Activated B cell treated with CpG ODN at 0.5 μM for 24 hours (primary cell): ENCODE measurements at regions of chr16 and their contacts with region 1.

Region 1: DNA sequence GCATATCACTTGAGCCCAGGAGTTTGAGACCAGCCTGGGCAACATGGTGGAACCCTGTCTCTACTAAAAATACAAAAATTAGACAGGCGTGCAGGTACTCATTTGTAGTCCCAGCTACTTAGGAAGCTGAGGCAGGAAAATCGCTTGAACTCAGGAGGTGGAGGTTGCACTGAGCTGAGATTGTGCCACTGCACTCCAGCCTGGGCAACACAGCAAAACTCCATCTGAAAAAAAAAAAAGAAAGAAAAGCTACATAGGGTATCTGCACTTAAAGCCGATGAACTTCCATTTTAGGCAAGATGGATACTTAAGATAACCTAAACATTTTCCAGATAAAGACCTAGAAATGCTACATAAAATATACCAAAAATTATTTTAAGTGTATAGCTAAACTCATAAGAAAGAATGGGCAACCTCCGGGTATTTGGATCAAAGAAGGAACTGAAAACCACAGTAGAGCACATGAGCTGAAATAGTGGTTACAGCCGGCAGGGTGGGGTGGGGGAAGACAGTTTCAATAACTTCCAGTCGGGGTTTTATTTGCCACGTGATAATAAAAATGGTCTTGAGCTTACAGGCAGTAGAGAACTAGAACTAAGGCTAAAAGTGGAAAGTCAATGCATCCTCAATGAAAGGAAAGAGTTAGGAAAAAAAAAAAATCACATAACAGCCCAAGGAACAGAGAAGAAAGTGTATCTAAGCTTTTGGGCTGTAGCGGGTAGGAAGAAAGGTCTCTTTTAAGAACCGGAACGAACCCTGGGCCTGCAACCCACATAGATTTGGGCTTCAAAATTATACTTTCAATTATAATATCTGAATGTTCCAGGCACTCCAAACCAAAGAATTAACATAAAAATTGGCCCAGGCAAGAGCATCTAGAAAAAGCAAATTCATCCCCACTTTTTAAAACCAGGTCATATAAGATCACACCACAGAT is 53.1 kb downstream of the CFDP1 start:
- DNase-seq: peak; percentile 37
- ATAC-seq: peak; percentile 97
- H3K4me3 Mint-ChIP-seq: peak overlapping the region; percentile 48
- H3K27ac Mint-ChIP-seq: no peak overlapping the region
- H3K4me1 Mint-ChIP-seq: peaks cover 28% of the 10 kb centered on the region
- H3K27me3 Mint-ChIP-seq: peaks cover 70% of the 10 kb centered on the region
- CTCF ChIP-seq: no peak

Region 2: DNA sequence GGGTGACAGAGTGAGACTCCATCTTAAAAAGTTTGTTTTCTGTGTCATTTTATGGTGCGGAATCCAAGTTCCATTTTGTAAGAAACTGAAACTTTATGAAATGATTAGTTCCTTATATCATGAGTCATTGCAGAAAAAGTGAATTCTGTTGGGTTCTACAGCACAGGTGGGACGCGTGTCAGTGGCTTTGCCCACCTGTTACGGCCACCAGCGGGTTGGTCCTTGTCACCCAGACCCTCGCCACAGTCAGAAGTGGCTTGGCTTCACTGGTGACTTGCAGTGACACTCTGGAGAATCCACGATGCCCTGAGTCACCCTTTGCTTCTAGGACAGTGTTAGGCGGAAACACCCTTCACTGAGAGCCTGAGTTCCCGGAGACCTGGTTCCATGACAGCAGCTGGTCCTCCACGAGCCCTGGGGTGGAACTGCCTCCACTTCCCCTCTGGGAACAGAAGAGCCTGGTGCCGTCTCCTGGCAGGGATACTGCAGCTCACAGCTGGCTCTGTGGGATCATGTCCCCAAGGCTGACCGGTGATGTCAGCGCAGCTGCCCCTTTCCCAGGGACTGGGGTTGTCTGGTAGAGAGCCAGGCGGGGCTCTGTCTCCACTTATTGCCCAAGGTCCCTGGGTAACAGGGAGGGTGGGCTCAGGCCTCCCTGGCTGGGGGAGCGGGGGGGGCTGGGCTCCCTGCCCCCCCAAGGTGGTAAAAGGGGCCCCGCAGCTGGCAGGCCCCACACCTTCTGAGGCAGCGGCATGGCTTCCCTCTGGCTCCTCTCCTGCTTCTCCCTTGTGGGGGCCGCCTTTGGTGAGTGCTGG is 161.7 kb before region 1 on chr16 and contains the start of gene CTRB1:
- CTCF ChIA-PET with region 1: interaction called, 5 read pairs
- POLR2A ChIA-PET with region 1: no interaction called
- intact Hi-C with region 1: loop called (anchors 5 kb)
- DNase-seq: no peak
- ATAC-seq: peak; percentile 67
- H3K4me3 Mint-ChIP-seq: peak within 1 kb of the TSS; percentile 70
- H3K27ac Mint-ChIP-seq: peak within 1 kb of the TSS; percentile 63
- H3K4me1 Mint-ChIP-seq: peaks cover 11% of the 10 kb centered on the region
- H3K27me3 Mint-ChIP-seq: peaks cover 5% of the 10 kb centered on the region
- CTCF ChIP-seq: no peak
- total RNA-seq, gene CTRB1: not detected in 2 replicates

Region 3: DNA sequence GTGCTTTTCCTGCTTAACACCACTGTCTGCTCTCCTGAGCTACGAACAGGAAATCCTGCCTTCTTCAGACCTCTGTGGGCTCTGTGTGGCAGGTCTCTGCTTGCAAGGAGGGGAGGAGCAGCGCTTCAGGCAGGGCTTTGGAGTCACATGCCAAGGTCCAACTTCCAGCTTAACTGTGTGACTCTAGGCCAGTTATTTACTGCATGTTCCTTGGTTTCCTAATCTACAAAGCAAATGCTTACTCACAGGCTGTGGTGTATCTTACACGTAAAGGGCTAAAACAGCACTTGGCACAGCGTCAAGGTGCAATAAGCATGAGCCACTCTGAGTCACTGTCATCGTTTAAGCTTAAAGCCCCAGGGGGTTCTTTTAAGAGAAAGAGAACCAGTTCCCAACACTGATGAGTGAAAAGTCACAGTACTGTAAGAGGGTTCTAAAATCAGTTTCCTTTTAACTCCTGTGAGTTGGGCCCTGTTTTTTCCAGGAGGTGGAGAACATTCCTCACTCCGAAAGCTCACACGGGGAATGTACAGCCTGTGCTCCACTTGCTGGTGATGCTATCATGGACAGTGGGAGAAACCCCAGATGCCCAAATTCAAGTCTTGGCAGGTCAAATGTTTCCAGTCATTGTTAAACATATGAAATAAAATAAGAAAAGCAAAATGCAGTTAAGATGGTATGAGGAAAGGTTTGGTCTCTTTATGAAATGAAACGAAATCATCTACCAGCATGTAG is 74.6 kb before region 1 on chr16:
- CTCF ChIA-PET with region 1: no interaction called
- POLR2A ChIA-PET with region 1: interaction called, 3 read pairs
- intact Hi-C with region 1: loop called (anchors 5 kb)
- DNase-seq: no peak
- ATAC-seq: peak; percentile 90
- H3K4me3 Mint-ChIP-seq: no peak overlapping the region
- H3K27ac Mint-ChIP-seq: no peak overlapping the region
- H3K4me1 Mint-ChIP-seq: peaks cover 2% of the 10 kb centered on the region
- H3K27me3 Mint-ChIP-seq: peaks cover 2% of the 10 kb centered on the region
- CTCF ChIP-seq: no peak